ENCODE measurements at regions of chr16 and their contacts with region 1.

Region 1: DNA sequence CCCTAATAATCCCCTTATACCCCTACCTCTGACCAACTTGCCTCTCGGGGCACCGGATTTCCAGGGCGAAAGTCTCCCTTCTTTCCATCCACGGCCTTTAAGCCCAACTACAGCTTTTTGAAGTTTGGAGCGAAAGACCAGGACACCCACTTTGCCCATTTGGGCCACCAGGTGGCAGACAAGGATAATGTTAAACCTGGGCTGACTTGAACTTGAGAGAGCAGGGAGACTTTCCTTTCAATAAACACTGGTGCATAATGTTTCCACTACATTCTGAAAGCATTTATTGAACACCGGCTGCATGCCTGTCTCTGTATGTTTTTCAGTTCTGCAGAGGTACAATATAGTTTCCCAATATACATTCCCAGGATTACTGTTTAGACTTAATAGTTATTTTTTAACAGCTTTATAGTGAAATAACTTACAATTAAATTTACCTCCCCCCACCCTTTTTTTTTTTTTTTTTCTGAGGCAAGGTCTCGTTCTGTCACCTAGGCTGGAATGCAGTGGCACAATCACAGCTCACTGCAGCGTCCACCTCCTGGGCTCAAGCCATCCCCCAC is 6.9 kb upstream of the CES3 start:
- DNase-seq: peak; percentile 73
- ATAC-seq: peak; percentile 93
- H3K4me3 ChIP-seq: no peak overlapping the region
- H3K27ac ChIP-seq: no peak overlapping the region
- H3K4me1 ChIP-seq: no peaks in the 10 kb centered on the region; the same call in 1 of the 2 replicates
- H3K27me3 ChIP-seq: peaks cover 12% of the 10 kb centered on the region
- CTCF ChIP-seq: peak; percentile 84
- POLR2A ChIP-seq: no peak
- RAD21 ChIP-seq: peak; percentile 86

Region 2: GRCh38 chr16:67112591-67113399 is 158.6 kb after region 1 on chr16:
- CTCF ChIA-PET with region 1: no interaction called
- POLR2A ChIA-PET with region 1: interaction called, 17 read pairs
- dilution Hi-C with region 1: no loop called
- in situ Hi-C with region 1: no loop called
- intact Hi-C with region 1: no loop called
- DNase-seq: no peak
- ATAC-seq: no peak
- H3K4me3 ChIP-seq: no peak overlapping the region
- H3K27ac ChIP-seq: no peak overlapping the region
- H3K4me1 ChIP-seq: peaks cover 19% of the 10 kb centered on the region
- H3K27me3 ChIP-seq: no peaks in the 10 kb centered on the region
- CTCF ChIP-seq: no peak
- POLR2A ChIP-seq: no peak
- RAD21 ChIP-seq: no peak